GM12878 (cell line): ENCODE measurements at regions of chr13 and their contacts with region 1.

Region 1: GRCh38 chr13:97855570-97856303 is 97.7 kb upstream of the IPO5 start:
- DNase-seq: peak; percentile 13
- ATAC-seq: peak; percentile 93
- H3K4me3 ChIP-seq: no peak overlapping the region
- H3K27ac ChIP-seq: no peak overlapping the region
- H3K4me1 ChIP-seq: peaks cover 13% of the 10 kb centered on the region
- H3K27me3 ChIP-seq: 0 out of 4 replicates have a peak, but pooled peaks cover 0 to 2% of the 10 kb centered on the region in 2 experiments
- CTCF ChIP-seq: peak; percentile 76 to 82 (median 77)
- EP300 ChIP-seq: no peak
- POLR2A ChIP-seq: no peak
- RAD21 ChIP-seq: peak; percentile 72

Region 2: DNA sequence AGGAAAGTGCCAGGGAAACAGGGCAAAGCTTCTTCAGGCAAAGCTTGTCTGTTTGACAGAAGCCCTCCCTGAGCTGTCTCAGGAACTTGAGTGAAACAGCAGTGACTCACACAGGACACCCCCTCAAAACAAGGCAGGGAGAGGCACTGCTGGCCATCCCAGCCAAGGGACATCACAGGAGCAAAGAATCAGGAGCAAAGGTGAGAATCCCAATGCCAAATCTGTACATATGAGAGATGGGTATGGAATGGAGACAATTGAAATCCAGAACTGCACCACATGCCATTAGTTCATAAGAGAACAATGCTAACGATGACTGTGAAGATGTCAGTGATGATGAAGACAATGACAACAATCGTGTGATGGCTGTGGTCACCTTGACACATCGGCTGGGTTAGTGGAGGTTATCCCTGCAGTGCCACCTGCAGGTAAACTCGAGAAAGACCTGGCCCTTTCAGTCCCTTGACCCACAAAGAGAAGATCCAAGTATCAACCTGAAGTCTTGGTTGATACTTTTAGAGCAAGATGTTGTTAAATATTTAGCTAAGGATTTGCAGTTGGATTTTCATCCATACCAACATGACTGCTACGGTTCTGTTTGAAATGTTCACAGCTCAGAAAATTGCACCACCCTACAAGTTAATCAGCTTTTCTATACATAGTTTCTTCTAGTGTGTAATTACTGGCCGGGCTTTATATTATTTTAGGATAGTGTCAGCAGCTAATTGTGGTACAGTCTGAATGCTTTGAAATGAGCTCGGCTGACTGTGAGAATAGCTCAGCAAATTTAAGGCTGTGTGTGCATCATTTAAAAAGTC is 55.8 kb after region 1 on chr13:
- CTCF ChIA-PET with region 1: interaction called, 24 read pairs
- POLR2A ChIA-PET with region 1: no interaction called
- RAD21 ChIA-PET with region 1: interaction called, 8 read pairs
- SMC1A ChIA-PET with region 1: no interaction called
- in situ Hi-C with region 1: no loop called
- intact Hi-C with region 1: loop called (anchors 1 kb)
- DNase-seq: no peak
- ATAC-seq: peak; percentile 76
- H3K4me3 ChIP-seq: no peak overlapping the region
- H3K27ac ChIP-seq: no peak overlapping the region
- H3K4me1 ChIP-seq: no peaks in the 10 kb centered on the region
- H3K27me3 ChIP-seq: no peaks in the 10 kb centered on the region; a peak in 1 of 4 replicates
- CTCF ChIP-seq: peak; percentile 38 to 57 (median 51); a peak in 5 of 6 replicates
- EP300 ChIP-seq: no peak
- POLR2A ChIP-seq: no peak
- RAD21 ChIP-seq: 0 out of 2 replicates have a peak, but pooled peaks have one; percentile 13

Region 3: GRCh38 chr13:98429977-98430736 is 574.4 kb after region 1 on chr13:
- CTCF ChIA-PET with region 1: interaction called, 7 read pairs
- POLR2A ChIA-PET with region 1: no interaction called
- RAD21 ChIA-PET with region 1: no interaction called
- SMC1A ChIA-PET with region 1: no interaction called
- in situ Hi-C with region 1: no loop called
- intact Hi-C with region 1: loop called (anchors 5 kb)
- DNase-seq: no peak
- ATAC-seq: no peak
- H3K4me3 ChIP-seq: no peak overlapping the region
- H3K27ac ChIP-seq: no peak overlapping the region
- H3K4me1 ChIP-seq: no peaks in the 10 kb centered on the region
- H3K27me3 ChIP-seq: no peaks in the 10 kb centered on the region; a peak in 1 of 4 replicates
- CTCF ChIP-seq: no peak
- EP300 ChIP-seq: no peak
- POLR2A ChIP-seq: no peak
- RAD21 ChIP-seq: no peak

Region 4: GRCh38 chr13:98672944-98673545 is 817.3 kb after region 1 on chr13:
- CTCF ChIA-PET with region 1: interaction called, 10 read pairs
- POLR2A ChIA-PET with region 1: no interaction called
- RAD21 ChIA-PET with region 1: interaction called, 14 read pairs
- SMC1A ChIA-PET with region 1: interaction called, 6 read pairs
- in situ Hi-C with region 1: loop called (anchors 10 kb)
- intact Hi-C with region 1: loop called (anchors 1 kb)
- DNase-seq: peak; percentile 13
- ATAC-seq: peak; percentile 96
- H3K4me3 ChIP-seq: no peak overlapping the region
- H3K27ac ChIP-seq: no peak overlapping the region
- H3K4me1 ChIP-seq: no peaks in the 10 kb centered on the region
- H3K27me3 ChIP-seq: no peaks in the 10 kb centered on the region; a peak in 1 of 4 replicates
- CTCF ChIP-seq: peak; percentile 85 to 90 (median 86)
- EP300 ChIP-seq: no peak
- POLR2A ChIP-seq: no peak
- RAD21 ChIP-seq: peak; percentile 88